Activated naive CD4-positive, alpha-beta T cell treated with anti-CD3 and anti-CD28 coated beads, Interleukin-2, amount 10 ng/mL, durations not matched to agents 7 days and 5 days (primary cell): ENCODE measurements at regions of chr1 and their contacts with region 1.

Region 1: DNA sequence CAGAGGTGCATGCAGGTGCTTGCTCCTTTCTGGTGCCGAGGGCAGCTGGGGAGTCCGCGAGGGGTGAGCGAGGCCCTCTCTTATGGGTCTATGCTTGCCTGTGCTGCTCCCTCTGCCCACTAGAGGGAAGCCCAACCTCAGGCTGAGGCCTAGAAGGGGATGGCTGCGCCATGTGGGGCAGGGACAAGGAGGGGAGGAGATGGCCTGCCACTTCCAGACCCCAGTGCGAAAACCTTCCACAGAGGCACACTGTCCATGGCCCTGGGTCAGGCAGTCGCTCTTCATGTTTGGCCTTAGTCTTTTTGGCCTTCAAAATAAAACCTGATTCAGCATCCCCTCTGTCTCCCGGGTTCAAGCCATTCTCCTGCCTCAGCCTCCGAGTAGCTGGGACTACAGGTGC is 14.0 kb downstream of the RHBG start:
- DNase-seq: peak; percentile 72
- H3K4me3 Mint-ChIP-seq: no peak overlapping the region
- H3K27ac Mint-ChIP-seq: no peak overlapping the region
- H3K4me1 Mint-ChIP-seq: peaks cover 5% of the 10 kb centered on the region
- H3K27me3 Mint-ChIP-seq: peaks cover 66% of the 10 kb centered on the region

Region 2: DNA sequence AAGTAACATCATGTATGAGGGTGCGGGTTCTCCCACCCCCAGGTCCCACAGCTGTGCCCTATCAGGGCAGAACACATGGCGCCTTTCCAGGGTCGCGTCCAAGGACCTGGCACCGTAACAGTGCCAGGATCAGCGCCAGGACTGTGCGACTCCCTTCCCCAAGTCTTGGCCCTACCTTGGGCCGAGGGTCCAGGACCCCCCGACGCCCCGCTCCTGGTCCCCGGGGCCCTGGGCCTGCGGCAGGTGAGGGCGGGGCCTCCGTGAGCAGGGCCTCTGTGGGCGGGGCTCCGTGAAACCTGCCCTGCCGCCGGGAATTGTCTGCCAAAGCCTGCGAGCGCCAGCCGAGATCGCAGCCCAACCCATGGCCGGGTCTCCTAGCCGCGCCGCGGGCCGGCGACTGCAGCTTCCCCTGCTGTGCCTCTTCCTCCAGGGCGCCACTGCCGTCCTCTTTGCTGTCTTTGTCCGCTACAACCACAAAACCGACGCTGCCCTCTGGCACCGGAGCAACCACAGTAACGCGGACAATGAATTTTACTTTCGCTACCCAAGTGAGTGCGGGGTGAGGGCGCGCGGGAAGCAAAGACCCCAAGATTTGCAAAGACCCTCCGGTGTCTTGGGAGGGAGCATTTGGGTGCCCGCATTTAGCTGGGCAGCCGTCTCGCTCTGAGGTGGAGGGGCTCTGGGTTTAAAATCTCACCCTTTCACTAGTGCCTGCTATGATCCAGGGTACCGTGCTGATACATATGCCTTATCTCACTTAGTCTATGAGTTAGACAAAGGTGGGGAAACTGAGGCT is 13.9 kb before region 1 on chr1 and contains the start of gene RHBG:
- CTCF ChIA-PET with region 1: interaction called, 39 read pairs
- DNase-seq: peak; percentile 40
- H3K4me3 Mint-ChIP-seq: peak within 1 kb of the TSS; percentile 55
- H3K27ac Mint-ChIP-seq: no peak within 1 kb of the TSS
- H3K4me1 Mint-ChIP-seq: peaks cover 3% of the 10 kb centered on the region
- H3K27me3 Mint-ChIP-seq: peaks cover 92% of the 10 kb centered on the region

Region 3: DNA sequence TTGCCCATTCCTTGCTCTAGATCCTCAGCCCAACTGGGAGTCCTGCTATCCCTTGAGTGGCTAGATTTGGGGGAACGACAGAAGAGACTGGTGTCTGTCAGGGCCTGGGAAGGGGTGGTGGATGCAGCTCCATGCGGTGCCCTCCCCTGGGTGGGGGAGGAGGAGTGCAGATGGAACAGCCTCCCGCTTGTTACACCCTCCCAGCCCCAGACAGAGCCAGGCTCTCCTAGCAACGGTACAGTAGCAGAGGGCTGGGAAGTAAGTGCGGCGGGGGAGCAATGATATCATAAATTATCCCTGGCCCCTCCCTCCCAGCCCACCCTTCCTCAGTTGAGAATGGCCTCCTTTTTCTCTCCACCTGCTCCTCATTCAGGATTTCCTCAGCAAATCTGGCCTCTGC is 23.2 kb after region 1 on chr1:
- CTCF ChIA-PET with region 1: interaction called, 15 read pairs
- DNase-seq: no peak
- H3K4me3 Mint-ChIP-seq: no peak overlapping the region
- H3K27ac Mint-ChIP-seq: no peak overlapping the region
- H3K4me1 Mint-ChIP-seq: no peaks in the 10 kb centered on the region
- H3K27me3 Mint-ChIP-seq: peaks cover 97% of the 10 kb centered on the region

Region 4: GRCh38 chr1:156419854-156420204 is 36.8 kb after region 1 on chr1:
- CTCF ChIA-PET with region 1: interaction called, 24 read pairs
- DNase-seq: peak; percentile 35
- H3K4me3 Mint-ChIP-seq: peak overlapping the region; percentile 71
- H3K27ac Mint-ChIP-seq: no peak overlapping the region
- H3K4me1 Mint-ChIP-seq: peaks cover 17% of the 10 kb centered on the region
- H3K27me3 Mint-ChIP-seq: peaks cover 95% of the 10 kb centered on the region

Region 5: GRCh38 chr1:156445789-156446263 is 62.8 kb after region 1 on chr1:
- CTCF ChIA-PET with region 1: interaction called, 337 read pairs
- DNase-seq: peak; percentile 85
- H3K4me3 Mint-ChIP-seq: no peak overlapping the region
- H3K27ac Mint-ChIP-seq: peak overlapping the region; percentile 38
- H3K4me1 Mint-ChIP-seq: peaks cover 6% of the 10 kb centered on the region
- H3K27me3 Mint-ChIP-seq: peaks cover 75% of the 10 kb centered on the region

Region 6: DNA sequence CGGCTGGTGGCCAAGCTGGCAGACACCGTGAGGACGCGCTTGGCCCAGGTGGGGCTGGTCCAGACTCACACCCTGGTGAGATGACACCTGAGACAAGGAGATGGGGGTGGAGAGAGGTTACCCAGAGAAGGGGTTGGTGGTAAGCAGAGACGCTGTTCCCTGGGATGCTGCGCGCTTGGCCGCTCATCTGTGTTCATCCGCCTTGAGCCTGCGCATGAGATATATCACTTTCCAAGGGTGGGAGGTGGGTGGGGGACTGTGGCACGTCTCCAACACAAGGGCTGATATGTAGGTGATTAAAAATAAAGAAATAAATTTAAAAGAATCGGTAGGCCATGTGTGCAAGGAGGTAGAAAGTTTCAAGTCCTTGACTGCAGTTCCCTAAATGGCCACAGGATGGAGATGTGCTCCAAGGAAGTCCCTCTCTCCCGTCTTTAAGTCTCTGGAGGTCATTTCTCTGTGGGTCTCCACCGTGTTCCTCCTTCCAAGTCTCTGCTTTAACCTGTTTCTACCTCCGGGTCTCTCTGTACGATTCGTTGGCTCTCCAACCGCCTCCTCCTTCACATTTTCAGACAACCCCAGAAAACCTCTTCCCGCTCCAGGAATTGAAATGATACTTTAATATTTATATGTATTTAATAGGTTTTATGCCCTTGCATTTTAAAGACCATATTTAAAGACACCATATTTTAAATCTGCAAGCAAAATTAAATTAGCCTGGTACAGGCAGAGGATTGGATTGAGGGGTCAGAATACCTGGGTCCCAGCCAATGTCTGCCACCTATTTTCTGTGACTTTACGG is 201.0 kb after region 1 on chr1:
- CTCF ChIA-PET with region 1: interaction called, 15 read pairs
- DNase-seq: peak; percentile 86
- H3K4me3 Mint-ChIP-seq: no peak overlapping the region
- H3K27ac Mint-ChIP-seq: no peak overlapping the region
- H3K4me1 Mint-ChIP-seq: peaks cover 33% of the 10 kb centered on the region
- H3K27me3 Mint-ChIP-seq: peaks cover 9% of the 10 kb centered on the region